ENCODE measurements at regions of chr11 and their contacts with region 1.

Region 1: DNA sequence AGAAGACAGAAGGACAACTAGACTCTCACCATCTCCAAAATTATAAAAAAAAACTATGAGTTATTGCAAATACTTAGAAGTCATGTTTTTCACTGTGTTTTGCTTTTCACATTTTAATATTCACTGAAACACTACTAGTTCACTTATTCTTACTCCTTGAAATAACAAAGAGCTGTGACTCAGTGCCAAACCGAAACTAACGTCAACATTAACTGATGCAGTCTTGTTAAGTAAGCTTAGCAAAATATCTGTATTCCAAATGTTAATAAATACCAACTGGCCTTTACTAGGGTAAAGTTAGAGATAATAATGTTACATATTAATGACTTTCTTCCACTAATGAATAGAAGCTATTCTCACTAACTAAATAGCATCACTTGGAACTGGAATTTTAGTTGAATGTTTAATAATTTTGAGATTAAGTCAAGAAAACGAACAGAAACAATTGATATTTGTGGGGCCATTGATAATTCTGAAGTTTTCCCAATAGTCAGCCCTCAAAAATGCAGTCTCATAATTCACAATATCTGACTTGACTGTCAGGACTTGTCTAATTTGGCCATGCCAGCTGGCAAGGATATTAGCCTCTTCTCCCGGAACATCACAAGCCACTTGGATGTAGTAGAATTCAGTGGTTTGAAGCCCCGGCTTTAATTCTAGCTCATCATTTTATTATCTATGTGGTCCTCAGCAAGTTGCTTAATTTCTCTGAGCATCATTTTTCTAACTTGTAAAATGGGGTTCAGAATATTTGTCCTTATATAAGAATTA is 230.1 kb upstream of the DDI1 start:
- DNase-seq: peak; percentile 13
- H3K4me3 Mint-ChIP-seq: peak overlapping the region; percentile 26
- H3K27ac Mint-ChIP-seq: peak overlapping the region; percentile 25
- H3K4me1 Mint-ChIP-seq: peaks cover 33% of the 10 kb centered on the region
- H3K27me3 Mint-ChIP-seq: no peaks in the 10 kb centered on the region
- CTCF ChIP-seq: no peak

Region 2: GRCh38 chr11:103700622-103701021 is 105.7 kb before region 1 on chr11:
- CTCF ChIA-PET with region 1: interaction called, 3 read pairs
- intact Hi-C with region 1: loop called (anchors 2 kb)
- DNase-seq: no peak
- H3K4me3 Mint-ChIP-seq: no peak overlapping the region
- H3K27ac Mint-ChIP-seq: no peak overlapping the region
- H3K4me1 Mint-ChIP-seq: peaks cover 33% of the 10 kb centered on the region
- H3K27me3 Mint-ChIP-seq: no peaks in the 10 kb centered on the region
- CTCF ChIP-seq: no peak

Region 3: GRCh38 chr11:103888541-103888951 is 82.2 kb after region 1 on chr11:
- CTCF ChIA-PET with region 1: interaction called, 4 read pairs
- intact Hi-C with region 1: loop called (anchors 2 kb)
- DNase-seq: peak; percentile 10
- H3K4me3 Mint-ChIP-seq: no peak overlapping the region
- H3K27ac Mint-ChIP-seq: peak overlapping the region; percentile 62
- H3K4me1 Mint-ChIP-seq: peaks cover 29% of the 10 kb centered on the region
- H3K27me3 Mint-ChIP-seq: no peaks in the 10 kb centered on the region
- CTCF ChIP-seq: no peak

Region 4: GRCh38 chr11:103920449-103920848 is 114.1 kb after region 1 on chr11:
- CTCF ChIA-PET with region 1: no interaction called
- intact Hi-C with region 1: loop called (anchors 5 kb)
- DNase-seq: no peak
- H3K4me3 Mint-ChIP-seq: no peak overlapping the region
- H3K27ac Mint-ChIP-seq: no peak overlapping the region
- H3K4me1 Mint-ChIP-seq: peaks cover 43% of the 10 kb centered on the region
- H3K27me3 Mint-ChIP-seq: no peaks in the 10 kb centered on the region
- CTCF ChIP-seq: no peak